ENCODE measurements at regions of chr15 and their contacts with region 1.

Region 1: DNA sequence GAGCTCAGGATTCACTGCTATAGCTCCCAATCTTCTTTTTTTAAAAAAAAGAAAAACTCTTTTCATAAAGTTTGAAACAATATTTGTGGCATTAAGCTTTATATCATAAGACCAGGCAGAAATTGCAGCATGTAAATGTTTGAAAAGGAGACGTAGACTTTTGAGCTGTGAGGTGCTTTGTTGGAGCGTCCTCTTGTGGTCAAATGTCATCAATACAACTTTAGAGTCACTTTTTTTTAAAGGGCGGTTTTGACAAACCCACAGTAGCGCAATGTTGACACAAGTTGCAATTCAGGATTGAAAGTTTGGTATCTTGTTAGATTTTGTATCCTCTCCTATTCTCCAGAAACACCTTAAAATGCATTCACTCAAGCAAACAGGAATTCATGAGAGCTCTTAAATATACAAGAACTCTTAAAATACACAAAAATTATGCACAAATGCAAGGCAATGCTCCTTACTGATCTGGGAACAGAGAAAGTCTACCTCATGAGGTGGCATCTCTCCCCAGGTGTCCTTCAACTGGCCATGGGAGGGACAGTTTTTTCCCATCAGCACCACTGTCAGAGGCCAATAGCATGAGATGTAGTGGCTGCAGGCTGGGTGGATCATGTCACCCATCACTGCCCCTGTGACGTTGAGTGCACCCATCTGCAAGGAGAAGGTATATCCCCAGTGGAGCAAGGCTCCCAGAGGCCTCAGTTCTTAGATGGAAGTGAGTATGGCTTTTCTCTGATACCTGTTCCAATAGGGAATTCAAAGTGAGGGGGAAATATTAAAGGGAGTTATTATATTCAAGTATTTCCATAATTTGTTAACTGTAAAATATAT is 70.7 kb downstream of the ANXA2 start:
- DNase-seq: peak; percentile 47
- ATAC-seq: peak; percentile 39
- H3K4me3 Mint-ChIP-seq: no peak overlapping the region
- H3K27ac Mint-ChIP-seq: no peak overlapping the region
- H3K4me1 Mint-ChIP-seq: no peaks in the 10 kb centered on the region
- H3K27me3 Mint-ChIP-seq: peaks cover 26% of the 10 kb centered on the region
- CTCF ChIP-seq: peak; percentile 92

Region 2: DNA sequence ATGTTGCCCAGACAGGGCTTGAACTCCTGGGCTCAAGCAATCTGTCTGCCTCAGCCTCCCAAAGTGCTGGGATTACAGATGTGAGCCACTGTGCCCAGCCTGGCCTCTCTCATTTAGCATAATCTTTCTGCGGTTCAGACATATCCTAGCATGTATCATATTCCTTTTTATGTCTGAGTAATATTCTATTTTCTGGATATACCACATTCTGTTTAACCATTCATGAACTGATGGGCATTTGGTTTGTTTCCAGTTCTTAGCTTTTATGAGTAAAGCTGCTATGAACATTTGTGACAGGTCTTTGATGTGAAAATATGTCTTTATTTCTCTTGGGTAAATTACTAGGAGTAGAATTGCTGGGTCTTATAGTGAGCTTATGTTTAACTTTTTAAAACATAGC is 865.5 kb before region 1 on chr15:
- CTCF ChIA-PET with region 1: no interaction called
- POLR2A ChIA-PET with region 1: no interaction called
- intact Hi-C with region 1: no loop called
- DNase-seq: no peak
- ATAC-seq: no peak
- H3K4me3 Mint-ChIP-seq: no peak overlapping the region
- H3K27ac Mint-ChIP-seq: no peak overlapping the region
- H3K4me1 Mint-ChIP-seq: no peaks in the 10 kb centered on the region
- H3K27me3 Mint-ChIP-seq: peaks cover 9% of the 10 kb centered on the region
- CTCF ChIP-seq: no peak

Region 3: GRCh38 chr15:59725172-59725486 is 601.9 kb before region 1 on chr15:
- CTCF ChIA-PET with region 1: interaction called, 47 read pairs
- POLR2A ChIA-PET with region 1: no interaction called
- intact Hi-C with region 1: no loop called
- DNase-seq: no peak
- ATAC-seq: no peak
- H3K4me3 Mint-ChIP-seq: no peak overlapping the region
- H3K27ac Mint-ChIP-seq: no peak overlapping the region
- H3K4me1 Mint-ChIP-seq: peaks cover 3% of the 10 kb centered on the region
- H3K27me3 Mint-ChIP-seq: peaks cover 2% of the 10 kb centered on the region
- CTCF ChIP-seq: peak; percentile 15

Region 4: GRCh38 chr15:59751552-59752413 is 575.3 kb before region 1 on chr15:
- CTCF ChIA-PET with region 1: interaction called, 20 read pairs
- POLR2A ChIA-PET with region 1: no interaction called
- intact Hi-C with region 1: loop called (anchors 10 kb)
- DNase-seq: no peak
- ATAC-seq: peak; percentile 91
- H3K4me3 Mint-ChIP-seq: no peak overlapping the region
- H3K27ac Mint-ChIP-seq: no peak overlapping the region
- H3K4me1 Mint-ChIP-seq: peaks cover 7% of the 10 kb centered on the region
- H3K27me3 Mint-ChIP-seq: peaks cover 2% of the 10 kb centered on the region
- CTCF ChIP-seq: peak; percentile 68

Region 5: GRCh38 chr15:60162241-60162967 is 164.6 kb before region 1 on chr15:
- CTCF ChIA-PET with region 1: no interaction called
- POLR2A ChIA-PET with region 1: no interaction called
- intact Hi-C with region 1: no loop called
- DNase-seq: no peak
- ATAC-seq: no peak
- H3K4me3 Mint-ChIP-seq: no peak overlapping the region
- H3K27ac Mint-ChIP-seq: no peak overlapping the region
- H3K4me1 Mint-ChIP-seq: no peaks in the 10 kb centered on the region
- H3K27me3 Mint-ChIP-seq: peaks cover 14% of the 10 kb centered on the region
- CTCF ChIP-seq: no peak

Region 6: GRCh38 chr15:60212536-60212935 is 114.5 kb before region 1 on chr15:
- CTCF ChIA-PET with region 1: interaction called, 12 read pairs
- POLR2A ChIA-PET with region 1: no interaction called
- intact Hi-C with region 1: no loop called
- DNase-seq: no peak
- ATAC-seq: no peak
- H3K4me3 Mint-ChIP-seq: no peak overlapping the region
- H3K27ac Mint-ChIP-seq: no peak overlapping the region
- H3K4me1 Mint-ChIP-seq: no peaks in the 10 kb centered on the region
- H3K27me3 Mint-ChIP-seq: peaks cover 16% of the 10 kb centered on the region
- CTCF ChIP-seq: no peak

Region 7: GRCh38 chr15:60340207-60340921 is 13.3 kb after region 1 on chr15:
- CTCF ChIA-PET with region 1: interaction called, 21 read pairs
- POLR2A ChIA-PET with region 1: no interaction called
- intact Hi-C with region 1: no loop called
- DNase-seq: no peak
- ATAC-seq: no peak
- H3K4me3 Mint-ChIP-seq: no peak overlapping the region
- H3K27ac Mint-ChIP-seq: no peak overlapping the region
- H3K4me1 Mint-ChIP-seq: no peaks in the 10 kb centered on the region
- H3K27me3 Mint-ChIP-seq: no peaks in the 10 kb centered on the region
- CTCF ChIP-seq: no peak